Activated T-helper 1 cell treated with anti-CD3 and anti-CD28 coated beads, Interleukin-12 subunit alpha, Interleukin-12 subunit beta, Interleukin-2, Interleukin-4 antibody, amounts not matched to agents 30 ng/mL and 10 ng/mL and 1 ng/mL, durations not matched to agents 14 hours and 24 hours and 36 hours (primary cell): ENCODE measurements at regions of chr10 and their contacts with region 1.

Region 1: DNA sequence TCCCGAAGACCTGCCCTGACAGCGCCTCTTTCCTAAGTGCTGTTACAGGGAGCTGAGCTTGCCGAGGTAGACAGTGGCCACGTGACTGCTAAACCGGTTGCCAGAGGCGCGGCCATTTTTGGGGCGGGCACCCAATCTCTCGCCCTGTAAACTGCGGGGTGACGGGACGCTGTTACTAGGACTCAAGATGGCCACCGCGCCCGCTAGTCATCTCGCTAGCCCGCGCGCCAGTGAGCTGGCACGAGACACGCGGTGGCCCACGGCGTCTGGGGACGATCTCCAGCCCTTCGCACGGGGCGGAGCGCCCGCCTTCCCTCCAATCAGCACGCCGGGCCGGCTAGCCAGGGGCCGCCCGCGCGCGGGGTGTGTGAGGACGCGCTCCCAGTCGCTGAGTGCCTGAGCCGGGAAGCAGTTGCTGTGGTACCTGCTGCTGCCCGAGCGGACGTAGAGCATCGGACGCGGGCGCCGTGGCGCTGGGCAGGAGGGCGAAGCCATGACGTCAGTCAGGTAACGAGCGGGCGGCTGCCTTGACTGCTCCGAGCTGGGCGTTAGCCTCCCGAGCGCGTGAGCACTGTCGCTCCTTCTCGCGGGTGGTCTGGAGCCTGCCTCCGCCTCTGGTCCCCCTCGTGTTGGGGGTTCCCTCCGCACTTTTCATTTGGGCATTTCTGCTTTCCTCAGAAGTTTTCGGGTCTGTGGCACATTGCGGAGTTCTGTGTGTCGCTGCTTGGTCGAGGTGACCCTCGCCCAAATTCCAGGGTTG is 25.5 kb downstream of the ADK start:
- DNase-seq: peak; percentile 93
- H3K4me3 Mint-ChIP-seq: peak overlapping the region; percentile 93
- H3K27ac Mint-ChIP-seq: peak overlapping the region; percentile 88
- H3K4me1 Mint-ChIP-seq: peaks cover 45% of the 10 kb centered on the region
- H3K27me3 Mint-ChIP-seq: no peaks in the 10 kb centered on the region

Region 2: GRCh38 chr10:73956476-73957359 is 219.8 kb before region 1 on chr10:
- intact Hi-C with region 1: loop called (anchors 5 kb)
- DNase-seq: peak; percentile 20
- H3K4me3 Mint-ChIP-seq: peak overlapping the region; percentile 49
- H3K27ac Mint-ChIP-seq: peak overlapping the region; percentile 81
- H3K4me1 Mint-ChIP-seq: peaks cover 48% of the 10 kb centered on the region
- H3K27me3 Mint-ChIP-seq: no peaks in the 10 kb centered on the region

Region 3: DNA sequence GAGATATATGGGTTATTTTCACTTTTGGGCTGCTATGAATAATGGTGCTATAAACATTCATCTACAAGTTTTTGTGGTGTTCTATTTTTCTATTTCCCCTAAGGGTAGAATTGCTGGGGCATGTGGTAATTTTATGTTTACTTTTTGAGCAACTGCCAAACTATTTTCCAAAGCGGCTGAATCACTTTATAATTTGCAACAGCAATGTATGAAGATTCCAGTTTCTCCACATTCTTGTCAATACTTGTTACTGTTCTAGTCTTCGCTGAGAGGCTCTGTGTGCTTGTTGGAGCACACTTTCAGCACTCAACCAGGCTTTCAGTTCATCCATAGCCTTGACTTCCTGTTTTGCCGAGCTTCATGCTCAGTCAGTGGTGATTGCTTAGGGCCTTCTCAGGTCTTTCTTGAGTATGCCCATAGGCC is 13.4 kb after region 1 on chr10:
- intact Hi-C with region 1: loop called (anchors 2 kb)
- DNase-seq: peak; percentile 9
- H3K4me3 Mint-ChIP-seq: peak overlapping the region; percentile 58
- H3K27ac Mint-ChIP-seq: peak overlapping the region; percentile 72
- H3K4me1 Mint-ChIP-seq: peaks cover 47% of the 10 kb centered on the region
- H3K27me3 Mint-ChIP-seq: no peaks in the 10 kb centered on the region

Region 4: DNA sequence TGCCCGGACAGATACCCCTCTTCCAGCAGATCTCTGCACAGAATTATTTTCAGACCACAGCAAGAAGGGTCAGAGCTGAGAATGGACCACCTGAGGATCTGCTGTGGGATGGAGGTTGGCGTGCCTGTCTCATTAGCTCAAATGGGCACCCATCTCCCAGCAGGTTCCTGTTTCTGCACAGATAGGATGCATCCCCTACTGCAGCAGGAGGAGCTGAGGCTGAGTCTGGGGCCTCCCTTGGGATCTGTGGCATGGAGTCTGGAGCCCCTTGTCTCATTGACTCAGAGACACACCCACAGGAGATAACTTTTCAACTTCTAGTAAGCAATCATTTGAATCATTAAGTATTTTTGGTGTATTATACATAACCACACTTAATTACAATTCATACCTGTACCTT is 187.2 kb after region 1 on chr10:
- intact Hi-C with region 1: no loop called
- DNase-seq: no peak
- H3K4me3 Mint-ChIP-seq: no peak overlapping the region
- H3K27ac Mint-ChIP-seq: no peak overlapping the region
- H3K4me1 Mint-ChIP-seq: peaks cover 18% of the 10 kb centered on the region
- H3K27me3 Mint-ChIP-seq: no peaks in the 10 kb centered on the region

Region 5: GRCh38 chr10:74977913-74978847 is 801.6 kb after region 1 on chr10:
- intact Hi-C with region 1: loop called (anchors 5 kb)
- DNase-seq: peak; percentile 68
- H3K4me3 Mint-ChIP-seq: peak overlapping the region; percentile 47
- H3K27ac Mint-ChIP-seq: peak overlapping the region; percentile 75
- H3K4me1 Mint-ChIP-seq: peaks cover 55% of the 10 kb centered on the region
- H3K27me3 Mint-ChIP-seq: no peaks in the 10 kb centered on the region

Region 6: DNA sequence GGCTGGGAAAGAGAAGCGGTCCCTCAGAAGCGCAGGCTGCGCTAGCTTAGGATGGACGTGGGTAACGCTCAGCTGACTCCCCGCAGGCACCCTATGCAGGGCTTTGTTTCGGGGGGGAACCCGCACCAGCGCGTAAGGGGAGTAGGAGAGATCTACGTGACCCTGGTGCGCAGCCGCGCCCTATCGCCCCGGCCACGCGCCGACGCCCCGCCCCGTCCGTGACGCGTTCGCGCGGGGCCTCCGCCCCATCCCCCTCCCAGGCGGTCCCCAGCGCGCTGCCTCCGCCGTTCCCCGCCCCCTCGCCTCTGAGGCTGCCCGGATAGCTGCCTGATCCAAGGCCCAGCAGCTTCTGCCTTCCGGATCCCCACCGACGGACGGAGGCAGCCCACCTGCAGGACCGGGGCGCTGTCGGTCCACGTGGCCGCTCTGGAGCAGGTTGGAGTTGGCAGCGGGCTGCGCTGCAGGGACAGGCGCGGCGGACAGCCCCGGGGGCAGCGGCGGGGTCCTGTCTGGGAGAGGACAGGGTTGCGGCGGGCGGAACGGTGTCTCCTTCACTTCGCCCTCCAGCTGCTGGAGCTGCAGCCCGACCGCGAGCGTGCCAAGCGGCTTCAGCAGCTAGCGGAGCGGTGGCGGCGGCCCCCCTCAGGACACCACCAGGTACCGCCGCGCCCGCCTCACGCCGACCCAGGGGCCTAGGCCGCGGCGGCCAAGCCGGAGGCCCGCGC is 1033.9 kb after region 1 on chr10 and contains the start of gene VDAC2:
- intact Hi-C with region 1: loop called (anchors 1 kb)
- DNase-seq: peak; percentile 95
- H3K4me3 Mint-ChIP-seq: peak within 1 kb of the TSS; percentile 92
- H3K27ac Mint-ChIP-seq: peak within 1 kb of the TSS; percentile 100
- H3K4me1 Mint-ChIP-seq: peaks cover 30% of the 10 kb centered on the region
- H3K27me3 Mint-ChIP-seq: no peaks in the 10 kb centered on the region
- total RNA-seq, gene VDAC2: 220 and 224 TPM in 2 replicates